GM18951 (cell line): ENCODE measurements at regions of chr1 and their contacts with region 1.

Region 1: DNA sequence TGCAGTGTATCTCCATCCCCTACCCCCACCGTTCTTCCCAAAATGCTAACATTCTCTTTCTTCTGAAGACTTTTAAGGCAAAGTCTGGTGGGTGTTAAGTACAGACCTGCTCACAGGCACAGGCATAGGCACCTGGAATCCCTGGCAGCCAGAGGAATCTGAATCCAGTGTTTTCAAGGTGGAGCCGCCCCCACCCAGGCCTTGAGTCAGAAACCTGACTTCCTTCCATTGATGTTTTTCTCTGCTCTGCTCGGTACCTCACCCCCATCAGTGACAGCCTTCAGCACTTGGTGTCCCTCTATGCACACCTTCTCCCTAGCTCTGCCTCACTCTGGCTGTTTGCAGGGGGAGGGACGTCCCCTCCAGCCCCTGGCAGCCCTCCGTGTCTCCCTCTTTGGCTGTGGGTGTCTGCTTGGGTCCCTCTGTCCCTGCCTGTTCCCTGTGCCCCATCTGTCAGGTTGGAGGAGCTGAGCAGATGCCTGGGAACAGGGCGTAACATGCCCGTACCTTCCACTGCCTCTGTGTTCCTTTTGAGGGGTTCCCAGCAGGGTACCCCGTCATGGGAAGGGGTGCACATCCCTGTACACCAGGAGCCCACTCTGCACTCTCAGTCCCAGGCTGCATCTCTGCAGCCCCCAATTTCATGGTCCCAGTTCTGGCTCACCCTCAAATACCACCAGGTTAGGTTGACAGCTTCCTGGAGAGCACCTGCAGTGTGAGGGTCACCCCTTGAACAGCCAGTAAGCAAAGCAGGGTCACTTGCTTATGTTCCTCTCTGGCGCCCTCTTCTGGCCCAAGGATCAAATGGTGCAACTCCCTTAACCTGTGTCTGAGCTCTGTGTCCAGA is 6.7 kb downstream of the NCDN start:
- POLR2A ChIP-seq: no peak

Region 2: DNA sequence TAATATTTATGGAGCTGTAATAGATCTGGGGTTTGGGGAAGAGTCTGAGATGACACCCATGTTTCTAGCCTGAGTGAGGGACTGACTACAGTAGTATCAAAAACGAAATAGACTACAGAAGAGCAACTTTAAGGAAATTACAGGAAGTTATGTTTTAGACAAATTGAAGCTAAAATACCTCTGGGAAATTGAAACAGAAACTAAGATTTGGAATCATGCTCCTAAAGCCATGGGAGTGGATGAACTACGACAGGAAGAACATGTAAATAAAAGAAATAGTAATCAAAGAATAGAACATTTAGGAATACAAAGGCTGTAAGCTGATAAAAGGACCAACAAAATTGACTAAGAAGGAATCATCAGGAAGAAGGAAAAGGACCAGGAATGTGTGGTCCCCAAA is 75.9 kb before region 1 on chr1:
- in situ Hi-C with region 1: no loop called
- POLR2A ChIP-seq: no peak

Region 3: DNA sequence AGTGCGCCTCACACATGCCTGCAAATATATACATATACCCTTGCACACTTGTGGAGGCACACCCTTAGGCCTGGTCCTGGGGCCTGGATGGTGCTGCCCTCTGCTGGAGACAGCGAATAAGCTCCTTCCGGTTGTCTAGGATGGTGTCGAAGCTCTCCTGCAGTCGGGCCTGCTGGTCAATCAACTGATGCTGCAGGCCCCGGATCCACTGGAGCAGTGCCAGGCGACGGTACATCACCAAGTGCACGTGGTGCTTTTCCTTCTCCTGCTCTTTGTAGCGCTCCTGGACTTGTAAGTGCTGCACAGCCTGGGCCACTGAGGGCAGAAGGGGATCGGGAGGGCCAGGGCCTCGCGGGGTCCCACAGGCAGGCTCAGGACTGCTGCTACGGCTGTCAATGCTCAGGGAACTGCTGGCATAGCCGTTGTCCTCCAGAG is 151.3 kb after region 1 on chr1:
- in situ Hi-C with region 1: loop called (anchors 10 kb)
- POLR2A ChIP-seq: no peak